ENCODE measurements at regions of chr16 and their contacts with region 1.

Region 1: GRCh38 chr16:21590287-21590686 is 9.1 kb upstream of the METTL9 start:
- DNase-seq: peak; percentile 9 to 44 (median 35)
- H3K4me3 ChIP-seq: no peak overlapping the region
- H3K27ac ChIP-seq: no peak overlapping the region
- H3K4me1 ChIP-seq: peaks cover 0 to 24% (median 3%) of the 10 kb centered on the region in 4 experiments
- H3K27me3 ChIP-seq: no peaks in the 10 kb centered on the region

Region 2: GRCh38 chr16:21646721-21647561 is 56.7 kb after region 1 on chr16:
- CTCF ChIA-PET with region 1: interaction called, 176 read pairs
- POLR2A ChIA-PET with region 1: no interaction called
- DNase-seq: peak in 2 of 3 donors; percentile 9 to 29
- H3K4me3 ChIP-seq: no peak overlapping the region
- H3K27ac ChIP-seq: no peak overlapping the region
- H3K4me1 ChIP-seq: peaks cover 13 to 76% (median 24%) of the 10 kb centered on the region in 4 experiments
- H3K27me3 ChIP-seq: no peaks in the 10 kb centered on the region

Measured in common myeloid progenitor, CD34-positive (primary cell).